Colonic mucosa (tissue), 4 donors: ENCODE measurements at regions of chr7 and their contacts with region 1.

Region 1: GRCh38 chr7:31782411-31782991 is 95.5 kb downstream of the PPP1R17 start:
- DNase-seq: no peak
- H3K4me3 ChIP-seq: no peak overlapping the region
- H3K27ac ChIP-seq: no peak overlapping the region
- H3K4me1 ChIP-seq: no peaks in the 10 kb centered on the region
- H3K27me3 ChIP-seq: no peaks in the 10 kb centered on the region
- CTCF ChIP-seq: peak; percentile 71

Region 2: DNA sequence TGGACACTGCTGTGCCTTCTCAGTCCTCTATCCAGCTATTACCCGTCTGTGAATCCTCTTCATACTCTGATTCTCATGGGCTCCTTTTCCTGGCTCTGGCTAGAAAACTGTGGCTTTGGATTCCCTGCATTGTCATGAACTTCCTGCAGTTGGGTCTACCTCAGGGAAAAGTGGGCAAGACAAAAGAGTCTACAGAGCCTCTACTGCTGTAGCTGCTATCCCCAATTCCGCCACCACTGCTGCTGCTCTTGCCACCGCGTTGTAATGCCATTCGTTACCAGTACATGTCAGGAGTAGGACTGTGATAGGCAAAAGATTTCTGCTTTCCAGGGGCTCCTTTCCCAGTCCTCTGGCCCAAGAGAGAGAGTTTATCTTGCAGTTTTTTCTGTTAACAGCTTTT is 119.4 kb before region 1 on chr7:
- intact Hi-C with region 1: no loop called
- DNase-seq: no peak
- H3K4me3 ChIP-seq: no peak overlapping the region
- H3K27ac ChIP-seq: no peak overlapping the region
- H3K4me1 ChIP-seq: no peaks in the 10 kb centered on the region
- H3K27me3 ChIP-seq: no peaks in the 10 kb centered on the region
- CTCF ChIP-seq: no peak

Region 3: DNA sequence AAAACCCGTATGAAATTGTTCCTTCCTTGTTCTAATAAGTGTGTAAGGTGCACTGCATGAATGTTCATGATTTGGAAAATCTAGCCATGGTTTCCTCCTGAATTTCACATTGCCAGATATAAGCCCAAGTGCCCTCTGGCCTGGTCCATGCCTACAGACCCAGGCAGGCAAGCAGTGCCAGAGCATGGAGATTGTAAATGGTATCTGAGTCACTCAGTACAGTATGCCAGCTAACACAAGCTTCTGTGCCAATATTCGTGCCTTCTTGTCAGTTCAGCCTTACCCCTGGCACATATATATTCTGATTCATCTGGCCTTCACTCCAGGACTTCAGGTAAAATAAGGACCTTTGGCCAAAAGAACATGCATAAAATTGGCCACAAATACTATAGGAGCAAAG is 326.1 kb after region 1 on chr7:
- intact Hi-C with region 1: no loop called
- DNase-seq: no peak
- H3K4me3 ChIP-seq: no peak overlapping the region
- H3K27ac ChIP-seq: no peak overlapping the region
- H3K4me1 ChIP-seq: no peaks in the 10 kb centered on the region
- H3K27me3 ChIP-seq: no peaks in the 10 kb centered on the region
- CTCF ChIP-seq: no peak

Region 4: GRCh38 chr7:32164346-32164957 is 382.0 kb after region 1 on chr7:
- intact Hi-C with region 1: loop called (anchors 10 kb)
- DNase-seq: no peak
- H3K4me3 ChIP-seq: no peak overlapping the region
- H3K27ac ChIP-seq: no peak overlapping the region
- H3K4me1 ChIP-seq: no peaks in the 10 kb centered on the region
- H3K27me3 ChIP-seq: no peaks in the 10 kb centered on the region
- CTCF ChIP-seq: no peak

Region 5: GRCh38 chr7:32175099-32175498 is 392.6 kb after region 1 on chr7:
- intact Hi-C with region 1: no loop called
- DNase-seq: no peak
- H3K4me3 ChIP-seq: no peak overlapping the region
- H3K27ac ChIP-seq: no peak overlapping the region
- H3K4me1 ChIP-seq: no peaks in the 10 kb centered on the region
- H3K27me3 ChIP-seq: no peaks in the 10 kb centered on the region
- CTCF ChIP-seq: no peak